ENCODE measurements at regions of chr12 and their contacts with region 1.

Region 1: GRCh38 chr12:78146365-78146772 is 315.7 kb downstream of the NAV3 start:
- DNase-seq: no peak
- H3K4me3 Mint-ChIP-seq: no peak overlapping the region
- H3K27ac Mint-ChIP-seq: no peak overlapping the region
- H3K4me1 Mint-ChIP-seq: no peaks in the 10 kb centered on the region
- H3K27me3 Mint-ChIP-seq: no peaks in the 10 kb centered on the region

Region 2: GRCh38 chr12:78002878-78003277 is 143.5 kb before region 1 on chr12:
- CTCF ChIA-PET with region 1: no interaction called
- intact Hi-C with region 1: loop called (anchors 10 kb)
- DNase-seq: no peak
- H3K4me3 Mint-ChIP-seq: no peak overlapping the region
- H3K27ac Mint-ChIP-seq: no peak overlapping the region
- H3K4me1 Mint-ChIP-seq: no peaks in the 10 kb centered on the region
- H3K27me3 Mint-ChIP-seq: no peaks in the 10 kb centered on the region

Region 3: DNA sequence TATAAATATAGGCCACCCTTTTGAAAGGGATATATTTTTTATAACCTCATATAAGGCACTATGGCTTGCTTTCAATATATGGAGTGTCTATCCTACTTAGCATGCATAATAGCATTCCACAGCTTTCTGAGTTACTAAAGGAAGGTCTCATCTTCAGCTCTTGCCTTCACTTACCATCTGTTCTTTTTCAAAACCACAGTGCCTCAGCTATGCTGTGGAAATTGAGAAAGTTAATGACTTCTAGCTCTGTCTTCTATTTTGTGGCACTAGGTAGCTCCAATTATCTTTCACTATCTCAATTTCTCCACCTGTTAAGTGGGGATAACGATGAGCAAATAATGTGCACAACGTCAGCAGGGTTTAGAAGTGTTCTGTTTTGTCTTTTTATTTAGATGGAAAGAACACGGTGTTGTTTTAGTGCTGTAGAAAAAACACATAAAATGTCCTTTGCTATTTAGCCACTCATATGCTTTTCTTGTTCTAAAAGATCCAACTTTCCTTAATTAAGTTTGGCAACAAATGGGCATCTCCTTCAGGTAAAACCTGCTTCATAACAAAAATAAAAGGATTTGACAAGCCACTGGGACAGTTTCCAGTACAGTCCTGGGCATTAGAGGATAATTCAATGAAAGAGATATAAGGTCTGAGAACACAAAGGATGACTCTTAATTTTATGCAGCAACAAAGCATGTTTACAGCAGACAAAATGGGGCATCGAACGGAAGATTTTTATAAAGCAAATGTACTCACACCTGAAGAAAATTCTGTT is 256.2 kb after region 1 on chr12:
- CTCF ChIA-PET with region 1: no interaction called
- intact Hi-C with region 1: no loop called
- DNase-seq: no peak
- H3K4me3 Mint-ChIP-seq: no peak overlapping the region
- H3K27ac Mint-ChIP-seq: no peak overlapping the region
- H3K4me1 Mint-ChIP-seq: no peaks in the 10 kb centered on the region
- H3K27me3 Mint-ChIP-seq: no peaks in the 10 kb centered on the region

Region 4: DNA sequence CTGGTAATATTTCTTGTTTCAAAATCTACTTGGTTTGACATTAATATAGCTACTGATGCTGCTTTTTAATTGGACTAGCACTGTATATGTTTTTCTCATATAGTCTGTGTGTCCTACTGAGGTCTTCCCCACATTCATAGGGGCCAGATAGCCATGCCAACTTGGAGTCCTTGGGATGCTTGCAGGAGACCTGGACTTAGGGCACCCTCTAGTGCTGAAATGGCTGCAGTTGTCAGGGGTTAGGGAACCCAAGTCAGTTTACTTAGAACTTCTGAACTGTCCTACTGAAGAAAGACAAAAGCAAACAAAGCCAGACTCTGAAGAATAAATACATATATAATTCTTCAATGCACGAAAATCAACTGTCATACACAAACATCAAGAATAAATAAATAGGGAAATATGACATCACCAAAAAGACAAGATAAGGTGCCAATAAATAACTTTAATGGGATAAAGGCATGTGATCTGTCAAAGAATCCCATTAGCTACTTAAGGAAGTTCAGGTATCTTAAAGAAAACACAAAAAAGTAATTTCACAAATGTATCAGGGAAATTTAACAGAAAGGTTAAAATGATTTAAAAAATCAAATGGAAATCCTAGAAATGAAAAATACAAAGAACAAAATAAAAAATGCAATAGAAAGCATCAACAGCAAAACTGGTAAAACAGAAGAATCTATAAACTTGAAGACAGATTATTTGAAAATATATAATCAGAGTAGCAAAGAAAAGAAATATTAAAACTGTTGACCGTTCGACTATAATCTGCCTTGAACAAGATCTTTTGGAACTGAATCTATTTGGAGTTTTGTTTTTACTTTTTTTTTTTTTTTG is 438.5 kb after region 1 on chr12:
- CTCF ChIA-PET with region 1: no interaction called
- intact Hi-C with region 1: loop called (anchors 10 kb)
- DNase-seq: no peak
- H3K4me3 Mint-ChIP-seq: no peak overlapping the region
- H3K27ac Mint-ChIP-seq: no peak overlapping the region
- H3K4me1 Mint-ChIP-seq: no peaks in the 10 kb centered on the region
- H3K27me3 Mint-ChIP-seq: no peaks in the 10 kb centered on the region

Region 5: GRCh38 chr12:79373896-79374499 is 1227.6 kb after region 1 on chr12:
- CTCF ChIA-PET with region 1: interaction called, 3 read pairs
- intact Hi-C with region 1: loop called (anchors 5 kb)
- DNase-seq: peak; percentile 21
- H3K4me3 Mint-ChIP-seq: no peak overlapping the region
- H3K27ac Mint-ChIP-seq: no peak overlapping the region
- H3K4me1 Mint-ChIP-seq: no peaks in the 10 kb centered on the region
- H3K27me3 Mint-ChIP-seq: no peaks in the 10 kb centered on the region

Measured in activated naive CD4-positive, alpha-beta T cell treated with anti-CD3 and anti-CD28 coated beads for 36 hours (primary cell).